Posterior cingulate gyrus (tissue), 11 donors: ENCODE measurements at regions of chr1 and their contacts with region 1.

Region 1: GRCh38 chr1:10472220-10473144 is at the start of gene DFFA:
- DNase-seq: peak; percentile 92 to 99 (median 96)

Region 2: DNA sequence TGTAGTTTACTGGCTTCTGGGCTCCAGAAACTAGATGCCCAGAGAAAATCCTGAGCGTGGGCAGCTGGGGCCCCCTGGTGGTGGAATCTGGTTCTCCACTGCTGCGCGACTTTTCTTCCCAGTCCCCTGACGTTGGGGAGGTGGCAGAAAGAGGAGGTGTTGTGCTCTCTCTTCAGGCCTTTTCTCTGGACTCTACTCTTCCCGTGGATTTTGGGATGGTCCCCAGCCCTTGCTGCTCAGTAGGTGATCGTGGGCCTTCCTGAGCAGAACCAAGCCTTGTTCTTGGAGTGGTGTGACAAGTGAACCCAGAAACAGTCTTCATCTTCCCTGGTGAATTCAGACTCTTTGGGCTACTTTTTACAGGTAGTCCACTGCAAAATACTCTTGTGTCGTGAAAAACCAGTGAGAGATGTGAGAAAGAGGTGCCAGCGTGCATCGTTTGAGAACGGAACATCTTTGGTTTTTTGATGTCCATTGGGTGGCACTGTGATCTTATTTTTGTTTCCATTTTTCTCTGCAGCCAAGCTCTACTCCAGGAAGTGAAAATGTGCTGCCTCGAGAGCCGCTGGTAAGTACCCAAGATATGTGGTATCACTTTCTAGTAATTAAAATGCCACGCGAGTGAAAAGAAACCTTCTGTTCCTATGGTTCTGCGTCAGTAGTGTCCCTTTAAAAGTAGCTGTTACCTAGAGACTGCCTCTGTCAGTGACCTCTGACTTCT is 22.4 kb after region 1 on chr1:
- intact Hi-C with region 1: loop called (anchors 1 kb)
- DNase-seq: peak; percentile 61 to 97 (median 88)